ENCODE measurements at regions of chr11 and their contacts with region 1.

Region 1: DNA sequence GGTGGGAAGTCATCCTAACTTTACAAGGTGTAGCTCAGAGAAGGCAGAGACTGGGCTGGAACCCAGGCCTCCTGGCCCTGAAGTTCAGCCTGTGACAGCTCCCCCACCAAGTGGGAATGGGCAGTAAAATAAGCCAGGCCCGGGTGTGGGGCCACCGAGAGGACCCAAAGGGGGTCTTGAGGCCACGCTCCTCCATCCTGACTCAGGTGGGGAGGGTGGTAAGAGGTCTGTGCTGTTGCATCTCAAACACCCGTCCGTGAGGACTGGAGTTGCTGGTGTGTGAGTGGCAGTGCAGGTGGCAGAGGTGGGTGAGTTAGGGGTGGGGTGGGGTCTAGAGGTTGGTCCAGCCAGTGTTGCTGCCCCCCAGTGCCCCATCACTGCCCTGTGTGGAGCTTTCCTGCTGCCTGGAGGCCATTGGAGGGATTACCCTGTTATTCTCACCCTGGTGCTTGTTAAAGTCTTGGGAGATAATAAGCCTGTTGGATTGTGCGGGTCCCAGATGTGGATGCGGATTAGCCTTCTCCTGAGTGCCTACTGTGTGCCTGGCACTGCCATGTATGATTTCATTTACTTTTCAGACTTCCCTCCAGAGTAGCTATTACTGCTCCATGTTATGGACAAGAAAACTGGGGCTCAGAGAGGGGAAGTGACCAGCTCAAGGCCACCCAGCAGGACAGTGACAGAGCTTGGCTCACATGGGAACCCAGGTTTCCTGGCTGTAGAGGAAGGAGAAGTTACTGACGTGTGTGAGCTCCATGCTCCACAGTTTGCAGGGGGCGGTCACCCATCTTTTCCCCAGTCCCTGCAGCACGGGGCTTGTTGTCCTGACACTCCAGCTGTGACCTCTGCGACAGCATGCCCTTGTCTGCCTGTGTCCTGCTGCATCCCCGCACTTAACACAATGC is 12.9 kb downstream of the SERPINH1 start:
- DNase-seq: no peak
- ATAC-seq: peak; percentile 9 to 19

Region 2: GRCh38 chr11:75547580-75548058 is 27.3 kb before region 1 on chr11:
- intact Hi-C with region 1: loop called in 1 of 2 experiments (anchors 2 kb)
- DNase-seq: peak; percentile 80
- ATAC-seq: peak; percentile 91 to 94

Measured in left cardiac atrium (tissue), 4 donors.